MCF 10A (cell line): ENCODE measurements at regions of chr15 and their contacts with region 1.

Region 1: DNA sequence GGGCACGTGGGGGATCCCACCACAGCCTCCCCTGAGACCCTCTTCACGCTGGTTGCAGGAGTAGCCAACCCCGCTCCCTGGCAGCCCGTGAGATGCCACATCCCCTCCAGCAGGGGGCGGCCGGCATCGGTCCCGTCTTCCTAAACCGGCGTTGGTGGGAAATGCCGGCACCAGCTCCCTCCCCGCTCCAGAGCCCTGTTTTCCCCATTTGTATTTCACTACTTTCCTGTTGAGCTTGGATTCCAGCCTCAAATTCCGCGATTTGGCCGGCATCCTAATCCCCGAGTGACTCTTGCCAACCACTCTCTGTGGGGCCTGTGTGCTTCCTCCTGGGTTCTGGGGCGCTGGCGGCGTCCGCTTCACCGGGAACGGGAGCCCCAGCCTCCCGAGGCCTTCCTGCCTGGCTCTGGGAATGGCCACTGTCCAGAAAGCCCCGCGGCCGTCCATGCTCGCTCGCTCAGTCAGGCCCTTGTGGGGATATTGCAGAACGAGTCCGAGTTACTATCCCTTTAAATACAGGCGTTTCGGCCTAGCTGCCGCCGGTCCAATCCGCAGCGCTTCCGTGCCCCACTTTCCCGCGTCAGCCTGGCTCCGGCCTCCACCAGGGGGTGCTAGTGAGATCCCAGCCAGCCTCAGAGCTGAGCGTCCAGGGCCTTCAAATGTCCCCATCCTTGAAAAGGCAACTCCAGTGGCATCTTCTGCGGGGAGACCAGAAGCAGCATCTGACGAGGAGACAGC is 8.1 kb upstream of the ADAMTS17 start:
- DNase-seq: peak; percentile 93
- H3K4me3 Mint-ChIP-seq: peak overlapping the region; percentile 86
- H3K27ac Mint-ChIP-seq: peak overlapping the region; percentile 94
- H3K4me1 Mint-ChIP-seq: peaks cover 12% of the 10 kb centered on the region
- H3K27me3 Mint-ChIP-seq: no peaks in the 10 kb centered on the region
- CTCF ChIP-seq: peak; percentile 78

Region 2: DNA sequence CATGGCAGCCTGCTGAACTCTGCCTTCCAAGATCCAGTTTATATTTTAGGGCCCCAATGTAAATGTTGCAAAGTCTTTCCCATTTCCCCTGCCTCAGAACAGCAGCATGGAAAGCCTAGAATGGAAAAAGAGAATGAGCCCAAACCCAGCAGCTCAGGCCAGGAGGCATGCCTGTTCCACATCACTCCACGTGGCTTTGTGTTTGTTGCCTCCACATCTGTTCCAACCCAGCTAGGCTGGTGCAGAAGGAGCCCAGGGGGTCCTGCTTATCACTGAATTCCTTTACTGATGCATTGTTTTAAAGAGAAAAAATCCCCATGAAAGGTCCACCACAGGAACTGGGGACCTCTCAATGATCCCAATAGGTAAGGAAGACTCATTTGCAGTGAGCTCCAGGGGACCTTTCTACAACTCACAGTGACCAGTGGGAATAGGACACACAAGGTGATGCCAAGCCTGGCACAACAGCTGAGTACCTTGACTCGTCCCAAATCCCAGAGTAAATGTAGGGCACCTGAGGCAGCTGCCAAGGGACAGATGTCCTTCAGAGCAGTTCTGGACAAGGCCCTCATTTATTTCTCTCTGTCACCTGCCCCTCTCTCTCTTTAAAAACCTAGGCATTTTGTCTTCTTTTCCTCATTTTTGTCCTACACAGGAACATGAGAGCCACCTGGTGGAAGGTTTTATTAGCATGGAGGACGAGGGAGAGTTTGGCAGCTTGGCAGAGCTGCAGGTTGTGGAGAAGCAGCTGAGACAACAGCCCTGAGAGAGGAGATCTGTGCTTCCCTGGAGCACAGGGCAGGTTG is 33.6 kb after region 1 on chr15:
- CTCF ChIA-PET with region 1: interaction called, 213 read pairs
- POLR2A ChIA-PET with region 1: interaction called, 9 read pairs
- intact Hi-C with region 1: loop called (anchors 1 kb)
- DNase-seq: peak; percentile 50
- H3K4me3 Mint-ChIP-seq: no peak overlapping the region
- H3K27ac Mint-ChIP-seq: no peak overlapping the region
- H3K4me1 Mint-ChIP-seq: peaks cover 5% of the 10 kb centered on the region
- H3K27me3 Mint-ChIP-seq: no peaks in the 10 kb centered on the region
- CTCF ChIP-seq: peak; percentile 60

Region 3: GRCh38 chr15:100559330-100559729 is 209.5 kb after region 1 on chr15:
- CTCF ChIA-PET with region 1: interaction called, 36 read pairs
- POLR2A ChIA-PET with region 1: interaction called, 4 read pairs
- intact Hi-C with region 1: no loop called
- DNase-seq: peak; percentile 62
- H3K4me3 Mint-ChIP-seq: no peak overlapping the region
- H3K27ac Mint-ChIP-seq: no peak overlapping the region
- H3K4me1 Mint-ChIP-seq: no peaks in the 10 kb centered on the region
- H3K27me3 Mint-ChIP-seq: no peaks in the 10 kb centered on the region
- CTCF ChIP-seq: no peak

Region 4: GRCh38 chr15:100572362-100572983 is 222.6 kb after region 1 on chr15:
- CTCF ChIA-PET with region 1: interaction called, 80 read pairs
- POLR2A ChIA-PET with region 1: interaction called, 11 read pairs
- intact Hi-C with region 1: loop called (anchors 1 kb)
- DNase-seq: peak; percentile 11
- H3K4me3 Mint-ChIP-seq: no peak overlapping the region
- H3K27ac Mint-ChIP-seq: no peak overlapping the region
- H3K4me1 Mint-ChIP-seq: no peaks in the 10 kb centered on the region
- H3K27me3 Mint-ChIP-seq: no peaks in the 10 kb centered on the region
- CTCF ChIP-seq: peak; percentile 41